Calu3 (cell line): ENCODE measurements at regions of chr2 and their contacts with region 1.

Region 1: DNA sequence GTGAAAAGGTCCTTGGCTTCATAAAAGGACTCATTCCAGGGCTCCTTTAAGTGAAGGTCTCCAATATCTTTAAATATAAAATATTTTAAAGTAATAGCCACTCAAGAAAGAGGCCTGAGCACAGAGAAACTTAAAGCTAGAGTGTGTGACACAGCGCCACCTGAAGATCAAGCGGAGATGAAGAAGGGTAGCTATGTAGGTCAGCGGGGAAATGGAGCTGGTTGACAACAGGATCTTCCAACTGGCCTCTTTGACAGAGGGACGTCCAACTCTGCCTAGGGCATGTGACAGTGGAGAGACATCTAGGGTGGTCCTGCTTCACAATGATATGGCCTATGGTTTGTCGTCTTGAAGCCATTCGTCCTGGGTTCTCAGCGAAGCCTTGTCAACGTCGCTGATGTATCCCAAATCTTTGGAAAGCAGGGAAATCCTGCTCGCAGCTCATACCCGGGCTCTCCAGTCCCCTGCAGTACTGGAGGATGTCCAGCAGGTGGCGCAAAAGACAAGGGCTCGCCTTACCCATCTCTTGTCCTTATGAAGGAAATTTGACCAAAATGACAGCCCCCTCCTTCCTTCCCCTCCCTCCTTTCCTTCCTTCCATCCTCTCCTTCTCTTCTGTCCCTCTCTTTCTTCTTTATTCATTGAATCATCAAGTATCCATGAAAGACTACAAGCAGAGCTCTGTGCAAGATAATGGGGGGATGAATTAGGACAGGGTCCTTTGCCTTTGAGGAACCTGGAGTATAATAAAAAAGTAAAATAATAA is 59.6 kb downstream of the LONRF2 start:
- DNase-seq: peak; percentile 77
- H3K4me3 Mint-ChIP-seq: no peak overlapping the region
- H3K27ac Mint-ChIP-seq: no peak overlapping the region
- H3K4me1 Mint-ChIP-seq: peaks cover 4% of the 10 kb centered on the region
- H3K27me3 Mint-ChIP-seq: peaks cover 12% of the 10 kb centered on the region
- CTCF ChIP-seq: peak; percentile 97

Region 2: GRCh38 chr2:99559075-99559662 is 703.6 kb before region 1 on chr2:
- CTCF ChIA-PET with region 1: interaction called, 7 read pairs
- intact Hi-C with region 1: loop called (anchors 1 kb)
- DNase-seq: peak; percentile 85
- H3K4me3 Mint-ChIP-seq: no peak overlapping the region
- H3K27ac Mint-ChIP-seq: no peak overlapping the region
- H3K4me1 Mint-ChIP-seq: no peaks in the 10 kb centered on the region
- H3K27me3 Mint-ChIP-seq: peaks cover 90% of the 10 kb centered on the region
- CTCF ChIP-seq: peak; percentile 98

Region 3: DNA sequence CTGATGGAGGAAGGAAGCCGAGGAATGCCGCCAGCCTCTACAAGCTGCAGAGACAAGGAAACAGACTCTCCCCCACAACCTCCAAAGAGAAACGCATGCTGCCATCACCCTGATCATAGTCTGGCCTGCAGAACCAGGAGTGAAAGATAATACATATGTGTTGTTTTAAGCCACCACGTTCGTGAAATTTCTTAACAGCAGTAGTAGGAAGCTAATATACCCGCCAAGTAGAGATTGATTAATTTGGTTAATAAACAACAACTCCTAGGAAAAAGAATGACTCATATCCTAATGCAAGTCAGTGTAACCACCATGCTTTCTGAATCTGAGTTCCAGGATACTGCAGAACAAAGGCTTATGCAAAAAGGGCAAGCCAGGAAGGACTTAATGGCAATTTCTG is 23.0 kb after region 1 on chr2:
- CTCF ChIA-PET with region 1: interaction called, 15 read pairs
- intact Hi-C with region 1: loop called (anchors 2 kb)
- DNase-seq: peak; percentile 45
- H3K4me3 Mint-ChIP-seq: peak overlapping the region; percentile 27
- H3K27ac Mint-ChIP-seq: peak overlapping the region; percentile 98
- H3K4me1 Mint-ChIP-seq: peaks cover 35% of the 10 kb centered on the region
- H3K27me3 Mint-ChIP-seq: no peaks in the 10 kb centered on the region
- CTCF ChIP-seq: no peak

Region 4: GRCh38 chr2:100321181-100321865 is 58.6 kb after region 1 on chr2:
- CTCF ChIA-PET with region 1: interaction called, 8 read pairs
- intact Hi-C with region 1: loop called (anchors 2 kb)
- DNase-seq: peak; percentile 82
- H3K4me3 Mint-ChIP-seq: peak overlapping the region; percentile 80
- H3K27ac Mint-ChIP-seq: no peak overlapping the region
- H3K4me1 Mint-ChIP-seq: peaks cover 9% of the 10 kb centered on the region
- H3K27me3 Mint-ChIP-seq: no peaks in the 10 kb centered on the region
- CTCF ChIP-seq: peak; percentile 37

Region 5: GRCh38 chr2:100381240-100381639 is 118.5 kb after region 1 on chr2:
- CTCF ChIA-PET with region 1: interaction called, 125 read pairs
- intact Hi-C with region 1: loop called (anchors 1 kb)
- DNase-seq: peak; percentile 90
- H3K4me3 Mint-ChIP-seq: no peak overlapping the region
- H3K27ac Mint-ChIP-seq: no peak overlapping the region
- H3K4me1 Mint-ChIP-seq: no peaks in the 10 kb centered on the region
- H3K27me3 Mint-ChIP-seq: no peaks in the 10 kb centered on the region
- CTCF ChIP-seq: peak; percentile 84